Caco-2 (cell line): ENCODE measurements at regions of chr15 and their contacts with region 1.

Region 1: GRCh38 chr15:38563723-38564519 is 693 bp downstream of the RASGRP1 start:
- DNase-seq: peak; percentile 47 to 83
- H3K4me3 ChIP-seq: peak overlapping the region; percentile 75
- H3K4me3 Mint-ChIP-seq: peak overlapping the region; percentile 88
- H3K27ac Mint-ChIP-seq: no peak overlapping the region
- H3K4me1 ChIP-seq: no peaks in the 10 kb centered on the region
- H3K4me1 Mint-ChIP-seq: no peaks in the 10 kb centered on the region
- H3K27me3 ChIP-seq: no peaks in the 10 kb centered on the region
- H3K27me3 Mint-ChIP-seq: peaks cover 2% of the 10 kb centered on the region
- CTCF ChIP-seq: peak; percentile 88 to 94

Region 2: DNA sequence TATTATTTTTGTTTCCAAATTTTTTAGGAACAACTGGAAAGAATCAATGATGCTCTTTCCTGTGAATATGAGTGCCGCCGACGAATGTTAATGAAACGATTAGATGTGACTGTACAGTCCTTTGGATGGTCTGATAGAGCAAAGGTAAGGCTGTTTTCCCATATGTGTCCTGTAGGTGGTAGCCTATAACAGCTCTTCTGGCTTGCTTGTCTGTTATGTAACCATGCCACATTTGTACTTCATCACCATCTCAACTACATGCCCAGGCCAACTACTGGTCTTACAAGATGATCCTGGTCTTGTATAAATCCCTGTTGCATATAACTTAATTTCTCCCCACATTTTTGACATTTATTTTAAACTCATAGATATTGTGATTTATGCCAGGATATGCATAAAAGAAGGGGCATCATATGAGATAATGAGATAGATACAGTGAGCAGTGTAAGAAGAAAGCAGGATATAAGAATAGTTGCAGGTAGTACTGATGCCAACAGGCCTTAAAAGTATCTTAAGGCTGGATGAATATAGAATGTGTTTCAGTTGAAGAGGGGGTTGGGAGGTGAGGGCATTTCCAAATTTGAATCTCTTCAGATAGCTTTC is 89.7 kb before region 1 on chr15:
- CTCF ChIA-PET with region 1: no interaction called
- POLR2A ChIA-PET with region 1: no interaction called
- intact Hi-C with region 1: loop called (anchors 1 kb)
- DNase-seq: peak in 1 of 2 experiments; percentile 53
- H3K4me3 ChIP-seq: no peak overlapping the region
- H3K4me3 Mint-ChIP-seq: no peak overlapping the region
- H3K27ac Mint-ChIP-seq: no peak overlapping the region
- H3K4me1 ChIP-seq: no peaks in the 10 kb centered on the region
- H3K4me1 Mint-ChIP-seq: no peaks in the 10 kb centered on the region
- H3K27me3 ChIP-seq: no peaks in the 10 kb centered on the region
- H3K27me3 Mint-ChIP-seq: no peaks in the 10 kb centered on the region
- CTCF ChIP-seq: peak; percentile 64 to 66

Region 3: GRCh38 chr15:38624244-38625205 is 60.6 kb after region 1 on chr15:
- CTCF ChIA-PET with region 1: interaction called, 30 read pairs
- POLR2A ChIA-PET with region 1: no interaction called
- intact Hi-C with region 1: loop called (anchors 2 kb)
- DNase-seq: peak in 1 of 2 experiments; percentile 29
- H3K4me3 ChIP-seq: no peak overlapping the region
- H3K4me3 Mint-ChIP-seq: no peak overlapping the region
- H3K27ac Mint-ChIP-seq: peak overlapping the region; percentile 21
- H3K4me1 ChIP-seq: peaks cover 47% of the 10 kb centered on the region
- H3K4me1 Mint-ChIP-seq: peaks cover 30% of the 10 kb centered on the region
- H3K27me3 ChIP-seq: no peaks in the 10 kb centered on the region
- H3K27me3 Mint-ChIP-seq: no peaks in the 10 kb centered on the region
- CTCF ChIP-seq: no peak

Region 4: DNA sequence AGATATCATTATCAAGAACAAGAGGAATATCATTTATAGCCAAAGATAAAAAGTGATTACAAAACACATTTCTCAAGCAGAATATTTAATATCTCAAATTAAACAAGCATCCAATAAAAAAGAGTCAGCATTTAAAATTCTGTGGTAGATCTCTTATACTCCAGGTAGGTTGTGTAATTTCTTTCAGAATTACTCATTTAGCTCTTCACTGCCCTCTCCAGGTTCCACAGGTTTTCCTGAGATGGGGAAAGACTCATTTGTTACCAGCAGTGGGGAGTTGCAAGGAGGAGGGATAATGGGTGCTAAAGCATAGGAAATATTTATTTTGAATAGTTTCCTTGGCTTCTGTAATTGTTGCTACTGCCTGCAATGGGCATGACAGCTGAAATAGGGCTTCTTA is 83.8 kb after region 1 on chr15:
- CTCF ChIA-PET with region 1: interaction called, 26 read pairs
- POLR2A ChIA-PET with region 1: interaction called, 5 read pairs
- intact Hi-C with region 1: loop called (anchors 1 kb)
- DNase-seq: peak in 1 of 2 experiments; percentile 41
- H3K4me3 ChIP-seq: no peak overlapping the region
- H3K4me3 Mint-ChIP-seq: no peak overlapping the region
- H3K27ac Mint-ChIP-seq: no peak overlapping the region
- H3K4me1 ChIP-seq: no peaks in the 10 kb centered on the region
- H3K4me1 Mint-ChIP-seq: no peaks in the 10 kb centered on the region
- H3K27me3 ChIP-seq: no peaks in the 10 kb centered on the region
- H3K27me3 Mint-ChIP-seq: no peaks in the 10 kb centered on the region
- CTCF ChIP-seq: peak; percentile 28 to 52

Region 5: GRCh38 chr15:38683382-38684242 is 119.7 kb after region 1 on chr15:
- CTCF ChIA-PET with region 1: interaction called, 9 read pairs
- POLR2A ChIA-PET with region 1: no interaction called
- intact Hi-C with region 1: loop called (anchors 1 kb)
- DNase-seq: peak in 1 of 2 experiments; percentile 50
- H3K4me3 ChIP-seq: no peak overlapping the region
- H3K4me3 Mint-ChIP-seq: no peak overlapping the region
- H3K27ac Mint-ChIP-seq: no peak overlapping the region
- H3K4me1 ChIP-seq: no peaks in the 10 kb centered on the region
- H3K4me1 Mint-ChIP-seq: peaks cover 8% of the 10 kb centered on the region
- H3K27me3 ChIP-seq: no peaks in the 10 kb centered on the region
- H3K27me3 Mint-ChIP-seq: peaks cover 3% of the 10 kb centered on the region
- CTCF ChIP-seq: peak; percentile 58 to 65